A549 (cell line): ENCODE measurements at regions of chr14 and their contacts with region 1.

Region 1: DNA sequence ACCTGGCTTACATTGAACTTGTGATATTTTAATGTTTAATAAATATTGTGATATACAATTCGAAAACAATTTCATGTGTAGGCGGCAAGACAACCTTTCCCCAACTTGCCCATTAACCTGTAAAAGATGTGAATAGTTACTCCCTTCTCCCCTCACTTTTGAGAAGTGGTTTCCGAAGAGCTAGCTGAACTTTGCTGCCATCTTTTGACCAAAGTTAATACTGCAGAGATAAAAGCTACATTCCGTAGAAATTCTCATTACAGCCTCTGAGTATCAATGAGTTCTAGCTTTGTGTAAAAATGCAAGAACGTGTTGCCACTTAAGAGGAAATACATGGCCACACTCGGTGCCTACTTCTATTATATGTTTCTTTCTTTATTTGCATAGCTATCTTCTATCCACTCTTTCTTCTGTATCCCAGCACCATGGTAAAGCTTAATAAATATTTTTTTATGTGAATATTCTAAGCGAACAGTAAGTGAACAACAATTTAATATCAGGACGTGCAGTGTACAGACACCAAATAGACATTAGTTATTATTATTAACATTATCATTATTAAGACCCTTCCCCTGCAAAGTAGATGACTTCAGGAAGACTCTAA is 105.1 kb upstream of the TMEM260 start:
- DNase-seq: peak; percentile 19 to 37
- ATAC-seq: peak; percentile 30 to 73; a peak in 4 of 6 replicates
- H3K4me3 ChIP-seq: no peak overlapping the region
- H3K27ac ChIP-seq: no peak overlapping the region
- H3K4me1 ChIP-seq: no peaks in the 10 kb centered on the region
- CTCF ChIP-seq: peak; percentile 90
- EP300 ChIP-seq: no peak
- POLR2A ChIP-seq: no peak
- RAD21 ChIP-seq: peak; percentile 90 to 92

Region 2: GRCh38 chr14:55707365-55707804 is 767.1 kb before region 1 on chr14:
- CTCF ChIA-PET with region 1: interaction called, 16 read pairs
- POLR2A ChIA-PET with region 1: no interaction called
- DNase-seq: peak; percentile 41 to 61
- ATAC-seq: peak; percentile 56 to 77; a peak in 4 of 6 replicates
- H3K4me3 ChIP-seq: no peak overlapping the region
- H3K27ac ChIP-seq: peak overlapping the region in 1 of 2 experiments; percentile 34; a peak in 1 of 6 replicates
- H3K4me1 ChIP-seq: peaks cover 18% of the 10 kb centered on the region
- CTCF ChIP-seq: peak; percentile 86
- EP300 ChIP-seq: no peak
- POLR2A ChIP-seq: no peak
- RAD21 ChIP-seq: peak; percentile 90 to 94

Region 3: GRCh38 chr14:56073799-56074198 is 400.7 kb before region 1 on chr14:
- CTCF ChIA-PET with region 1: no interaction called
- POLR2A ChIA-PET with region 1: no interaction called
- DNase-seq: no peak
- ATAC-seq: no peak
- H3K4me3 ChIP-seq: no peak overlapping the region
- H3K27ac ChIP-seq: no peak overlapping the region
- H3K4me1 ChIP-seq: no peaks in the 10 kb centered on the region
- CTCF ChIP-seq: no peak
- EP300 ChIP-seq: no peak
- POLR2A ChIP-seq: no peak
- RAD21 ChIP-seq: no peak

Region 4: GRCh38 chr14:56129933-56130332 is 344.6 kb before region 1 on chr14:
- CTCF ChIA-PET with region 1: no interaction called
- POLR2A ChIA-PET with region 1: no interaction called
- DNase-seq: no peak
- ATAC-seq: no peak
- H3K4me3 ChIP-seq: no peak overlapping the region
- H3K27ac ChIP-seq: no peak overlapping the region
- H3K4me1 ChIP-seq: no peaks in the 10 kb centered on the region
- CTCF ChIP-seq: no peak
- EP300 ChIP-seq: no peak
- POLR2A ChIP-seq: no peak
- RAD21 ChIP-seq: no peak

Region 5: GRCh38 chr14:56339855-56340701 is 134.4 kb before region 1 on chr14:
- CTCF ChIA-PET with region 1: interaction called, 12 read pairs
- POLR2A ChIA-PET with region 1: no interaction called
- DNase-seq: peak; percentile 60 to 86
- ATAC-seq: peak; percentile 93 to 99
- H3K4me3 ChIP-seq: no peak overlapping the region
- H3K27ac ChIP-seq: peak overlapping the region; percentile 73 to 85
- H3K4me1 ChIP-seq: peaks cover 13% of the 10 kb centered on the region
- CTCF ChIP-seq: peak; percentile 81
- EP300 ChIP-seq: no peak
- POLR2A ChIP-seq: no peak
- RAD21 ChIP-seq: peak; percentile 88 to 94

Region 6: GRCh38 chr14:56463271-56463890 is 11.1 kb before region 1 on chr14:
- CTCF ChIA-PET with region 1: interaction called, 16 read pairs
- POLR2A ChIA-PET with region 1: no interaction called
- DNase-seq: no peak
- ATAC-seq: no peak
- H3K4me3 ChIP-seq: no peak overlapping the region
- H3K27ac ChIP-seq: no peak overlapping the region
- H3K4me1 ChIP-seq: no peaks in the 10 kb centered on the region
- CTCF ChIP-seq: no peak
- EP300 ChIP-seq: no peak
- POLR2A ChIP-seq: no peak
- RAD21 ChIP-seq: no peak